Breast epithelium (tissue), 4 donors: ENCODE measurements at regions of chr4 and their contacts with region 1.

Region 1: GRCh38 chr4:26466578-26467270 is 23.6 kb downstream of the CCKAR start:
- DNase-seq: no peak
- H3K4me3 ChIP-seq: no peak overlapping the region
- H3K27ac ChIP-seq: no peak overlapping the region
- H3K4me1 ChIP-seq: no peaks in the 10 kb centered on the region
- H3K27me3 ChIP-seq: no peaks in the 10 kb centered on the region
- CTCF ChIP-seq: no peak
- POLR2A ChIP-seq: no peak

Region 2: DNA sequence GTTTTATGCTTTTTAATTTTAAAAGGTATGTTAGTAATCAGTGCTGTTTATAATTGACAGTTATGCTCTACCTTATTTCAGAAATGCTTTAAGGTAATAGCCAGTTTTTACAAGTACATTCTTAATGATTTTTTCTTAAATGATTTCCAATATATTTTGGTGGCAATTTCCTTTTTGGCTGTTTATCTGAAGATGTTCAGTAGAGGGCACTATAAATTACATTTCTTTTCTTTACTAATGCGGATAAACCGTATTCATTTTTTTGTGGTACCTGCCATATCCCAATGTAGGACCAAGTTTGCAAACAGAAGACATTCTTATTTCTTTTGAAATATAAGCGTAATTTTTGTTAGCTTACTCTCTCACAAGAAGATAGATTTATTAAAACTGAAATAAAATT is 41.9 kb before region 1 on chr4:
- intact Hi-C with region 1: no loop called
- DNase-seq: no peak
- H3K4me3 ChIP-seq: no peak overlapping the region
- H3K27ac ChIP-seq: no peak overlapping the region
- H3K4me1 ChIP-seq: no peaks in the 10 kb centered on the region
- H3K27me3 ChIP-seq: no peaks in the 10 kb centered on the region
- CTCF ChIP-seq: no peak
- POLR2A ChIP-seq: no peak

Region 3: GRCh38 chr4:27210956-27211355 is 744.2 kb after region 1 on chr4:
- intact Hi-C with region 1: loop called (anchors 5 kb)
- DNase-seq: no peak
- H3K4me3 ChIP-seq: no peak overlapping the region
- H3K27ac ChIP-seq: no peak overlapping the region
- H3K4me1 ChIP-seq: no peaks in the 10 kb centered on the region
- H3K27me3 ChIP-seq: no peaks in the 10 kb centered on the region
- CTCF ChIP-seq: no peak
- POLR2A ChIP-seq: no peak